Pancreas (tissue), 10 donors: ENCODE measurements at regions of chr14 and their contacts with region 1.

Region 1: DNA sequence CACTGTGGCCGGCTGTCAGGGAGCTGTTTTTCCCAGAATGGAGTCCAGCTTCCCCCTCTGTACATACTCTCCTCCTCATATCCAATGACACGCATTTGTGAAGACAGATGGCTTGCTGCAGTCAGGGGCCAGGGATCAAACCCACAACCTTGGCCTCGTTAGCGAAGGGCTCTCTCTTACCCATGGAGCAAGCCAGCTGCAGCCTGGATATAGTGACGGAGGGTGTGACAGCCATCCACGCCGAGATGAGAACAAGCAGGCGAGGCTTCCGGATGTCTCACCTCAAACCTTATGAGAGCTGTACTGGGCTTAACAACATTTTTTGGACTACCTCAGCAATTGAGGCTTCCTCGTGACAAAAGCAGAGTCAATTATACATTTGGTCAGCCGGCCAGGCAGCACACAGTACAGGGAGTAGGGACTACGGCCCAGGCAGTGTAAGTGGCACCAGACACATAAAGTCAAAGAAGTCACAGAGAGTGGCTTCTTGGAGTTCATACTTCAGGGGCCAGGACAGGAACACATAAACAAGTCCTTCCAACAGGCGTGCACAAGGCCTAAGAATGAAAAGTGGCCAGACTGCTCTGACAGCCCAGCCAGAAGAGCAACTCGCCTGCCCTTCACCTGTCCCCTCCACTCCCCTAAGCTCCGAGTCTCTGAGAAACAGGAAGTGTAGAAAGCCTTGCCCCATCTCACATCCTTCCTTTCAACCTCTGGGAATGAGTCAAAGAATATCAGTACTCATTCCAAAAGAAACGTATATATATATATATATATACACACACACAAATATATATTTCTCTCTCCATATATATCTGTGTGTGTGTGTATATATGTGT is 115.1 kb downstream of the TTC7B start:
- DNase-seq: no peak
- ATAC-seq: no peak
- H3K4me3 ChIP-seq: no peak overlapping the region
- H3K27ac ChIP-seq: no peak overlapping the region
- H3K4me1 ChIP-seq: peaks cover 0 to 9% (median 4%) of the 10 kb centered on the region in 3 donors
- H3K27me3 ChIP-seq: no peaks in the 10 kb centered on the region
- CTCF ChIP-seq: no peak

Region 2: DNA sequence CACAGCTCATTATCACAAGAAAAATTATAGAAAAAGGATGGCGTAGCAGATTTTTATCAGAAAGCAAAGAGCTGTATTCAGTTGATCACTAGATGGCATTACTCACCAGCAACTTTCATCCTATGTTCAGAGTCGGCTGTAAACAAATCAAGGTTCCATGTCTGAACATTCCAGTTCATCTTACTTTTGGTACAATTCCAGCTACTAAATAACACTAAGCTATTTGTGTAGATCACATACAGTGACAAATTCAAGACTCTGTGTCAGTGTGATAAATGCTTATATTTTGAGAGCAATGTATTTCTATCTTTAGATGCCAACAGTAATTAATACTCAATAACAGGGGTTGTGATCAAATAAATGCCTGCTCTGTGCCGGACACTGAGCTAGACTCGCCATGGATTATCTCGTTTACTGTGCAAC is 399.5 kb before region 1 on chr14:
- intact Hi-C with region 1: loop called in 1 of 3 experiments (anchors 10 kb)
- DNase-seq: no peak
- ATAC-seq: peak; percentile 80 to 88 (median 86)
- H3K4me3 ChIP-seq: no peak overlapping the region
- H3K27ac ChIP-seq: peak overlapping the region in 2 of 4 donors; percentile 13 to 28
- H3K4me1 ChIP-seq: peaks cover 0 to 8% (median 4%) of the 10 kb centered on the region in 3 donors
- H3K27me3 ChIP-seq: no peaks in the 10 kb centered on the region
- CTCF ChIP-seq: peak in 2 of 4 donors; percentile 8 to 18

Region 3: DNA sequence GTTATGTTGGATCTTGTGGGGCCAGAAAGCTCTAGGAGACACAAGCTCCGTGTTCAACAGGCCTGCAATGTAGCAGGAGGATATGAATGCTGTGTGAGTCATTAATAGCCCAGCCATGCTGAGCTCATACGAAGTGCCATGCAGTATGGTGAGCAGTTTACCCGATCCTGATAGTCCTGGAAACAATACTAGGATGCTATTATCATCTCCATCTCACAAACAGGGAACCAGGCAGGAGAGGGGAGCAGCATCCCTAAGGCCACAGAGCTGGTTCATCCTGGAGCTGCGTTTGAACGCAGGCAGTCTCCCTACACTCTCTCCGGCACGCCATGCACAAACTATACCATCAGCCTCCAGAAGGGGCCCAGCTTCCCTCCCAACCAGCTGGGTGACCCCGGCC is 94.6 kb after region 1 on chr14:
- intact Hi-C with region 1: no loop called
- DNase-seq: no peak
- ATAC-seq: peak in 2 of 4 donors; percentile 41 to 72
- H3K4me3 ChIP-seq: no peak overlapping the region
- H3K27ac ChIP-seq: no peak overlapping the region
- H3K4me1 ChIP-seq: no peaks in the 10 kb centered on the region
- H3K27me3 ChIP-seq: no peaks in the 10 kb centered on the region
- CTCF ChIP-seq: no peak